ENCODE measurements at regions of chr12 and their contacts with region 1.

Region 1: DNA sequence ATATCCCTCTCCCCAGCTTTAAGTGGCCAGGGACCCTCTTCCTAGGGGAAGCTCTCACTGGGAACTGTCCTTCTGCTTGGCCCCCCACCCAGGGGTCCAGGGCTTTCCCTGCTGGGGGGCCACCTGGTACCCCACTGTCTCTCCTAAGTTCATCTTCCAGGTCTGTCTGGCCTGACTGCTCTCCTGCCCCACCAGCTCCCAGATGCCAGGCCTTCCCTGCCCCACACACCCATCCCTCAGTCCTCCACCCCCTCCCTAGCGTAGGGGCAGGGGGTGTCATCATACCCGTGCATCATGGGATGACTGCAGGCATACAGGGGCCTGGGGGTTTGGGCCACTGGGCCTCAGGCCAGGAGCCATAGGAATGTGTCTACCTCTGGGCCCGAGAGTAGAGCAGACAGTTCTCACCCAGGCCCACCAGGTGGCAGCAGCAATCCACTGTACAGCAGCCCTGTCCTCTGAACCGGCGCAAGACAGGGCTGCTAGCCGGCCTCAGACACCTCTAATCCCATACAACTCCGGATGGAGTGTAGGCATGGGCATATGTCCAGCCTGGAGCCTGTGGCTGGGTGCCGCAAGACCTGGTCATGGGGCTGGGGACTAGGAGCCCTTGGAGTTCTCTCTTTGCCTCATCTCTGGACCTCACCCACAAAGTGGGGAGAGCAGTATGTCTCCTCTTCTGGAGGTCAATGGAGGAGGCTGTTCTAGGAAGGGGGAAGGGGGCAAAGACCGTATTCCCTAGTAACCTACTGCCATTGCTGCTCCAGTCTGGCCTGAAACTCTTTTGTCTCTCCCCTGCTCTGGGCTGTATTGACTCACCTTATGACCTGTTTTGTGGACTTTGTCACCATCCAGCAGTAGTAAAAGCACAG is 10.0 kb upstream of the SMARCD1 start:
- DNase-seq: peak; percentile 89 to 92 (median 90)
- H3K4me3 ChIP-seq: no peak overlapping the region
- H3K27ac ChIP-seq: no peak overlapping the region
- H3K4me1 ChIP-seq: peaks cover 0 to 2% (median 0%) of the 10 kb centered on the region in 3 donors
- H3K27me3 ChIP-seq: no peaks in the 10 kb centered on the region
- CTCF ChIP-seq: peak; percentile 98

Region 2: GRCh38 chr12:49983892-49984291 is 91.3 kb before region 1 on chr12:
- intact Hi-C with region 1: no loop called
- DNase-seq: peak in 3 of 5 donors; percentile 54 to 92 (median 72)
- H3K4me3 ChIP-seq: no peak overlapping the region
- H3K27ac ChIP-seq: no peak overlapping the region
- H3K4me1 ChIP-seq: peaks cover 3 to 27% (median 19%) of the 10 kb centered on the region in 3 donors
- H3K27me3 ChIP-seq: no peaks in the 10 kb centered on the region
- CTCF ChIP-seq: no peak

Region 3: GRCh38 chr12:50174971-50175715 is 100.0 kb after region 1 on chr12:
- intact Hi-C with region 1: loop called (anchors 10 kb)
- DNase-seq: peak in 2 of 5 donors; percentile 89 to 90
- H3K4me3 ChIP-seq: no peak overlapping the region
- H3K27ac ChIP-seq: no peak overlapping the region
- H3K4me1 ChIP-seq: no peaks in the 10 kb centered on the region
- H3K27me3 ChIP-seq: no peaks in the 10 kb centered on the region
- CTCF ChIP-seq: peak; percentile 70

Region 4: DNA sequence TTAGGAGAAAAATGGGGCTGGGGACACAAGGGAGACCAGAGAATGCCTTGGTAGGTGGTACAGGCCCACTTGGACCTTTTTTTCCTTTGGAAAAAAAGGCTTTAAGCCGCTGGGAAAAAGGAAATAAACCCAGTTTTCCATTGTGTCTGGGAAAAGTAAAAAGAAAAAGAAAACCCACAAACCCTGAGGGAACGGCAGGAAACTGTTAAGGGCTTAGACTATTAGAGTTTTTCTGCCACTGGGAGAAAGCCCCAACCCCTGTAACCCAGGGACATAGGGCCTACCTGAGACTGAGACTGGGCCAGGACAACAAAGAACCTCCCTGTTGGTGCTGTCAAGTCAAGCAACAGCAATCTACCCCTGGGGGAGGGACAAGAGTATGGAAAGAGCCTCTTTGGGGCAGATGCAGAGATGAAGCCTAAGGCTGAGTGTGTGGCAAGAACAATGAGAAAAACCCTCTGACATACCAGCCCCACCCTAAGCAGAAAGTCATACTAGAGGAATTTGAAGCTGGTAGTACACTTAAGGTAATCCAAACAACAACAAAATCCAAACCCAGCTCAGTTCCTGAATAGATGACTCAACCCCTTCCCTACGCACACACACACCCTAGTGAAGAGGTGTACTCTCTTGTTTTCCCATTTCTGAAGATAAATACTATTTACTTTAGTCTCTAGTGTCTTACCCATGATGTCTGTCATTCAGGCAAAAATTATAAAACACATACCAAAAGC is 711.5 kb after region 1 on chr12:
- intact Hi-C with region 1: no loop called
- DNase-seq: no peak
- H3K4me3 ChIP-seq: no peak overlapping the region
- H3K27ac ChIP-seq: no peak overlapping the region
- H3K4me1 ChIP-seq: no peaks in the 10 kb centered on the region
- H3K27me3 ChIP-seq: no peaks in the 10 kb centered on the region
- CTCF ChIP-seq: no peak